AG04450 (cell line): ENCODE measurements at regions of chr10 and their contacts with region 1.

Region 1: DNA sequence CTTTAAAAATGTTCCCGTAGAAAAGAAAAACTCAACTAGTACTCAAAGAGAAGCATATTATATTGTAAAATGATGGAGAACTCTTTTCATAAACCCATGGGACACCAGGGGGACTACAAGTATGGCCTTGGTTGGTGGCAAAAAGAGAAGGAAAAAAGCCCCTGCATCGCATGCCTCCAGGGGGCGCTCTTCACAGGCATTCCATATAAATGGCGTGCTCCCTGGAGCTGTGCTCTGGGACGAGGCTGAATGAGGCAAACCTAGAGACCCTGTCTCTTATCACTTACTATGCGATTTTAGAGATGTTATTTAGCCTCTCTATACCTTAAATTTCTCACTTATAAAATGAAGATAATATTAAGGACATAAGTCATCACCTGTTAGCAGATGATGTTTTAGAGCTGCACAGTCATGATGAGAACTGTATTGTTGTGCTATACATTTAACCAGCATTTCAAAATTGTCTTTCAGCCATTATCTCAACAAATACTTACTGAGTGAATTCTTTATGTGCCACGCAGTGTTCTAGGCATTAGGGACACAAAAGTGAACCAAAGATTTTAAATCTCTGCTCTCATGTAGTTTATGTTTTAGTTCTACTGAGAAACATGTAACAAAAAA is 105.8 kb downstream of the ARHGAP21 start:
- DNase-seq: no peak
- H3K4me3 ChIP-seq: no peak overlapping the region
- H3K27ac ChIP-seq: no peak overlapping the region
- H3K27me3 ChIP-seq: no peaks in the 10 kb centered on the region
- CTCF ChIP-seq: peak; percentile 84

Region 2: GRCh38 chr10:24603333-24603732 is 14.5 kb before region 1 on chr10:
- CTCF ChIA-PET with region 1: interaction called, 14 read pairs
- POLR2A ChIA-PET with region 1: no interaction called
- DNase-seq: no peak
- H3K4me3 ChIP-seq: no peak overlapping the region
- H3K27ac ChIP-seq: no peak overlapping the region
- H3K27me3 ChIP-seq: no peaks in the 10 kb centered on the region
- CTCF ChIP-seq: no peak

Region 3: DNA sequence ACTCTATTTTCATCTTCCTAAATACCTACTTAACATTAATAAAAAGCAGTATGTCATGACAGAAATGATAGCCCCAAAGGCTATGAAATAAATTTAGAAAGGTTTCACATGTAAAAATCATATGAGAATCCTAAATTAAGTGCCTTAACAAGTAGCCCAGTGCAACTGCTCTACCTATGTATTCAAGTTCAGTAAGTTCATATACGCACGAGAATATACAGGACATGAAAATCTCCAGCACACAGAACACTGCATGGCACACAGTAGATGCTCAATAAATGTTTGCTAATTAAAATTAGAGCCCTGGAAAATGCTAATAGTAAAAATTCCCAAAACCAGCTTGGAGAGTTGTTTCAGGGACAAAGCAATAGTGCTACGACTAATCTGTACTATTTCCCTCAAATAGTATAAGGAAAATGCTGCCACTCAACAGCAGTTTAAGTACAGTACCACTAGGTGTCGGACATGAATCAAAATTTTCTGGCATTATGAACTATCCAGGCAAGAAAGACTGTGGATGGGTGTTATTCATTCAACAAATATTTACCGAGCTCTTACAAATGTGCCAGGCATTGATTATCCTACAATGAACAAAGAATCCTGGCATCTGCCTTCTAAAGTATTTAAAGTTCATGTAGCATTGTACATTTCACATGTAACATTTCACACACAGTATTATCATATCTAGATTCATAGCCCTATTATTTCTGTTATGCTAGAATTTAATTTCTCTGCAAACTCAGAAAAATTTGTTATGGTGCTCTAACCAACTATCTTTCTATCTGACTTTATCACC is 24.9 kb after region 1 on chr10:
- CTCF ChIA-PET with region 1: interaction called, 11 read pairs
- POLR2A ChIA-PET with region 1: no interaction called
- DNase-seq: peak; percentile 61
- H3K4me3 ChIP-seq: no peak overlapping the region
- H3K27ac ChIP-seq: no peak overlapping the region
- H3K27me3 ChIP-seq: no peaks in the 10 kb centered on the region
- CTCF ChIP-seq: peak; percentile 79

Region 4: GRCh38 chr10:24661376-24661775 is 43.5 kb after region 1 on chr10:
- CTCF ChIA-PET with region 1: no interaction called
- POLR2A ChIA-PET with region 1: no interaction called
- DNase-seq: no peak
- H3K4me3 ChIP-seq: no peak overlapping the region
- H3K27ac ChIP-seq: no peak overlapping the region
- H3K27me3 ChIP-seq: no peaks in the 10 kb centered on the region
- CTCF ChIP-seq: no peak